OCI-LY7 (cell line): ENCODE measurements at regions of chr1 and their contacts with region 1.

Region 1: GRCh38 chr1:151156515-151156819 is at the start of gene TNFAIP8L2:
- DNase-seq: peak; percentile 78
- H3K4me3 ChIP-seq: peak within 1 kb of the TSS; percentile 76
- H3K27ac ChIP-seq: peak within 1 kb of the TSS; percentile 57
- H3K4me1 ChIP-seq: peaks cover 38% of the 10 kb centered on the region
- CTCF ChIP-seq: no peak
- total RNA-seq, gene TNFAIP8L2: 7.7 and 12.5 TPM in 2 replicates

Region 2: DNA sequence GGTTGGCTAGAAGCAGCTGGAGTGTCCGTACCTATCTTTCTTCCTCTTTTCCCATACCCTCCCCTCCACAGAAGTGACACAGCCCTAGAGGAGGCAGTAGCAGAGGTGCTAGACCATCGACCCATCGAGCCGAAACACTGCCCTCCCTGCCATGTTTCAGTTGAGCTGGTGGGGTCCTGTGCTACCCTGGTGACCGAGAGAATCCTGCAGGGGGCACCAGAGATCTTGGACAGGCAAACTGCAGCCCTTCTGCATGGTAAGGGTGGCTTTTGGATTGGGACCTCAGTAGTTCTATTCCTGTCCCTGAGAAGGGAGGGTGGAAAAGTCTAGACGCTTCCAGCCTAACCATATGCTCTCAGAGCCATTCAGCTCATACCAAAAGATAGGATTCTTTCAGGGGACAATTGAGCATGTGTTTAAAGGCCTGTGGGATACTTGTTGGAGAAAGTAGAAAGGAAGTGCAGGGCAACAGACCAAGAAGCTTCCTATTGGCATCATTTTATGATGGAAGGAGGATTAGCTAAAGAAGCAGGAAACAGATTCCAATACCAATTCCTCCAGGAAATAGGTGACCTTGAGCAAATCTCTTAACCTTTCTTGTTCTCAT is 131.8 kb before region 1 on chr1:
- CTCF ChIA-PET with region 1: no interaction called
- POLR2A ChIA-PET with region 1: interaction called, 4 read pairs
- intact Hi-C with region 1: loop called (anchors 1 kb)
- DNase-seq: peak; percentile 67
- H3K4me3 ChIP-seq: no peak overlapping the region
- H3K27ac ChIP-seq: no peak overlapping the region
- H3K4me1 ChIP-seq: no peaks in the 10 kb centered on the region
- CTCF ChIP-seq: peak; percentile 87